CD4-positive, alpha-beta T cell (primary cell): ENCODE measurements at regions of chr5 and their contacts with region 1.

Region 1: DNA sequence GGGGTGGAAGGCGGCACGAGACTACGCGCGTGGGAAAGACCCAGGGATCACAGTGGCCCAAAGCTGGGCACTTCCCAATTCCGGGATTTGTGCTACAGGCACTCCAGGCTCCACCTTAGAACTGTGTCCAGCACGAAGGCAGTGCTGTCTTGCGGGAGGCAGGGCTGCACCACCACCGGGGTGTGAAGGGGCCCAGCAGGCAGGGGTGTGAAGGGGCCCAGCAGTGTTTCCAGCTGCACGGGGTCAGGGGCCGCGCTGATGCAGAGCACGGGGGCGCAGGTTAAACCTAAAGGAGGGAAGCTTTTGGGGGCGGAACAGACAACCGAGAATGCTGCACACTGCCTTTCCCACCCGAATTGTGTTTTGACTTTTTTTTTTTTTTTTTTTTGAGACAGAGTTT is 1.1 kb upstream of the PDCD6 start:
- DNase-seq: peak in 1 of 14 experiments; percentile 32
- ATAC-seq: no peak
- H3K4me3 ChIP-seq: peak overlapping the region; percentile 78
- H3K4me3 Mint-ChIP-seq: peak overlapping the region; percentile 82
- H3K27ac ChIP-seq: no peak overlapping the region
- H3K27ac Mint-ChIP-seq: peak overlapping the region; percentile 87
- H3K4me1 ChIP-seq: peaks cover 22% of the 10 kb centered on the region
- H3K4me1 Mint-ChIP-seq: peaks cover 37% of the 10 kb centered on the region
- H3K27me3 ChIP-seq: no peaks in the 10 kb centered on the region
- H3K27me3 Mint-ChIP-seq: no peaks in the 10 kb centered on the region
- CTCF ChIP-seq: no peak

Region 2: DNA sequence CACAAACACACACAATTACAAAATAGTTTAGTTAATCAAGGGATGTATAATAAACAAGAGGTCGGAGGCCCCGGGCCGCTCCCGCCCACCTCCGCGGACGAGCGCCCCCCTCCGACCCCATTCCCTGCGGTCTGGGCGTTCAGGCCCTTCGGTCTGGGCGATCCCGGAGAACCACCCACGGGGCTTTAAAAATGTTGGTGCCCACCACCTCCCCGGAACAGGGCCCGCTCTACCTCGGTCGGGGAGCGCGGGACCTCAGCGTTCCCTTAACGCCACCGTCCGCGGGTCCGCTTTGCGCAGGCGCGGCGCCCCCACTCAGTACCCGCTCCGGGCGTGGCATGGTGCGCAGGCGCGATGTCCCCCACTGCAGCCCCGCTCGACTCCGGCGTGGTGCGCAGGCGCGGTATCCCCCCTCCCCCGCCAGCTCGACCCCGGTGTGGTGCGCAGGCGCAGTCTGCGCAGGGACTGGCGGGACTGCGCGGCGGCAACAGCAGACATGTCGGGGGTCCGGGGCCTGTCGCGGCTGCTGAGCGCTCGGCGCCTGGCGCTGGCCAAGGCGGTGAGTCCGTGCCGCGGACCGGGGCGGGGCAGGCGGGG is 52.4 kb before region 1 on chr5 and contains the starts of genes CCDC127 and SDHA:
- CTCF ChIA-PET with region 1: interaction called, 6 read pairs
- POLR2A ChIA-PET with region 1: interaction called, 49 read pairs
- intact Hi-C with region 1: loop called in 1 of 2 experiments (anchors 1 kb)
- DNase-seq: peak; percentile 95 to 100 (median 98)
- ATAC-seq: peak; percentile 81
- H3K4me3 ChIP-seq: peak within 1 kb of the TSS; percentile 93
- H3K4me3 Mint-ChIP-seq: peak within 1 kb of the TSS; percentile 99
- H3K27ac ChIP-seq: peak within 1 kb of the TSS; percentile 57 to 80
- H3K27ac Mint-ChIP-seq: peak within 1 kb of the TSS; percentile 96
- H3K4me1 ChIP-seq: peaks cover 46% of the 10 kb centered on the region
- H3K4me1 Mint-ChIP-seq: peaks cover 68% of the 10 kb centered on the region
- H3K27me3 ChIP-seq: no peaks in the 10 kb centered on the region
- H3K27me3 Mint-ChIP-seq: no peaks in the 10 kb centered on the region
- CTCF ChIP-seq: peak; percentile 30
- total RNA-seq, gene CCDC127: 1.9 to 2.8 TPM
- total RNA-seq, gene SDHA: 244 to 245 TPM

Region 3: GRCh38 chr5:231661-232060 is 38.7 kb before region 1 on chr5:
- CTCF ChIA-PET with region 1: no interaction called
- POLR2A ChIA-PET with region 1: no interaction called
- intact Hi-C with region 1: no loop called
- DNase-seq: no peak
- ATAC-seq: no peak
- H3K4me3 ChIP-seq: no peak overlapping the region
- H3K4me3 Mint-ChIP-seq: no peak overlapping the region
- H3K27ac ChIP-seq: no peak overlapping the region
- H3K27ac Mint-ChIP-seq: no peak overlapping the region
- H3K4me1 ChIP-seq: no peaks in the 10 kb centered on the region
- H3K4me1 Mint-ChIP-seq: no peaks in the 10 kb centered on the region
- H3K27me3 ChIP-seq: no peaks in the 10 kb centered on the region
- H3K27me3 Mint-ChIP-seq: no peaks in the 10 kb centered on the region
- CTCF ChIP-seq: no peak